ENCODE measurements at regions of chr4 and their contacts with region 1.

Region 1: DNA sequence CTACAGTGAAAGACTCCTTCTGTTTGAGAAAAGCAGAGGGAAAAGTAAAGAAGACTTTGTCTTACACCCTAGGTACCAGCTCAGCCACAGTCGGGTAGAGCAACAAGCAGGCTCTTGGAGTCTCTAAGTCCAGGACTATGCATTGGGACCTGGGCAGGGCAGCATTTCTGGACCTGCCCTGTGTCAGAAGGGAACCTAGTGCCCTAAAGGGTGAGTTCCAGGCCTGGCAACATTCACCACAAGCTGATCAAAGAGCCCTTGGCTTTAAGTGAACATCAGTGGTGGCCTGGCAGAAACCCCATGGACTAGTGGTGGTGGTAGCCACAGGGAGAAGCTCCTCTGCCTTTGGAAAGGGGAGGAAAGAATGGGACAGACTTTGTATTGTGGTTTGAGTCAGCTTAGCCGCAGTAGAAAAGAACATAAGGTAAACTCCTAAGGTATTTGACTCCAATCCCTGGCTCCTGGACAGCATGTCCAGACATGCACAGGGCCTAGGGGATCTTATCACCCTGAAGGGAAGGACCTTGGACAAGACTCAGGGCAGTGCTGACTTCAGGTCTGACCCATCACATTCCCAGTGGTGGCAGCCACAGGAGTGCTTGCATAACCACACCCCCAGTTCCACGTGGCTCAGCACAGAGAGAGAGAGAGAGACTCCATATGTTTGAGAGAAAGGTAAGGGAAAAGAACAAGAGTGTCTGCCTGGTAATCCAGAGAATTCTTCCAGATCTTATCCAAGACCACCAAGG is 32.6 kb downstream of the CCDC158 start:
- DNase-seq: no peak
- ATAC-seq: no peak
- H3K4me3 ChIP-seq: no peak overlapping the region
- H3K4me3 Mint-ChIP-seq: no peak overlapping the region
- H3K27ac ChIP-seq: no peak overlapping the region
- H3K27ac Mint-ChIP-seq: no peak overlapping the region
- H3K4me1 ChIP-seq: no peaks in the 10 kb centered on the region
- H3K4me1 Mint-ChIP-seq: no peaks in the 10 kb centered on the region
- H3K27me3 ChIP-seq: no peaks in the 10 kb centered on the region
- H3K27me3 Mint-ChIP-seq: peaks cover 34% of the 10 kb centered on the region
- CTCF ChIP-seq: no peak

Region 2: GRCh38 chr4:76354517-76355473 is 33.5 kb before region 1 on chr4:
- CTCF ChIA-PET with region 1: no interaction called
- POLR2A ChIA-PET with region 1: no interaction called
- intact Hi-C with region 1: no loop called
- DNase-seq: peak in 4 of 9 experiments; percentile 24 to 74 (median 54)
- ATAC-seq: peak; percentile 66
- H3K4me3 ChIP-seq: peak overlapping the region in 1 of 2 experiments; percentile 20
- H3K4me3 Mint-ChIP-seq: peak overlapping the region; percentile 2
- H3K27ac ChIP-seq: no peak overlapping the region
- H3K27ac Mint-ChIP-seq: peak overlapping the region; percentile 1
- H3K4me1 ChIP-seq: peaks cover 14% of the 10 kb centered on the region
- H3K4me1 Mint-ChIP-seq: peaks cover 13% of the 10 kb centered on the region
- H3K27me3 ChIP-seq: no peaks in the 10 kb centered on the region
- H3K27me3 Mint-ChIP-seq: no peaks in the 10 kb centered on the region
- CTCF ChIP-seq: no peak

Region 3: DNA sequence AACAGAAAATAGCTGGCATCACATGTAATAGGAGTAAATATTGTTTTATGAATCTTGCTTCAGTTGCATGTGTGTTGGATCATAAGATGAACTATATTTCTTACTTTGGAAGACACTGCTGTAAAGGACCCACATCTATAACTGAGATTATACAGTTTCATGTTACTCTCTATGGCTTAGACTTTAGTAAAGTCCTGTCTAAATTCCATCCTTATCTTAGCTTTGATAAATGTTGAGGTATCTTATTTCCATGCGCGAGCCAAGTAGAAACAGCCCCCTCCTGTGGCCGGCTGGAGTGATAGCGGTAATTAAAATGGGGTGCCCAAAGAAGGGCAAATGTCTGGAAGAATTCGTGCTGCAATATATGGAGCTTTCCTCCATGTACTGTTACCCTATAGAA is 10.4 kb before region 1 on chr4:
- CTCF ChIA-PET with region 1: interaction called, 16 read pairs
- POLR2A ChIA-PET with region 1: no interaction called
- intact Hi-C with region 1: no loop called
- DNase-seq: peak; percentile 11 to 62 (median 37)
- ATAC-seq: peak; percentile 49
- H3K4me3 ChIP-seq: no peak overlapping the region
- H3K4me3 Mint-ChIP-seq: no peak overlapping the region
- H3K27ac ChIP-seq: no peak overlapping the region
- H3K27ac Mint-ChIP-seq: no peak overlapping the region
- H3K4me1 ChIP-seq: no peaks in the 10 kb centered on the region
- H3K4me1 Mint-ChIP-seq: no peaks in the 10 kb centered on the region
- H3K27me3 ChIP-seq: no peaks in the 10 kb centered on the region
- H3K27me3 Mint-ChIP-seq: no peaks in the 10 kb centered on the region
- CTCF ChIP-seq: peak; percentile 60

Region 4: GRCh38 chr4:76738086-76738931 is 350.0 kb after region 1 on chr4:
- CTCF ChIA-PET with region 1: no interaction called
- POLR2A ChIA-PET with region 1: no interaction called
- intact Hi-C with region 1: loop called in 1 of 2 experiments (anchors 10 kb)
- DNase-seq: no peak
- ATAC-seq: no peak
- H3K4me3 ChIP-seq: no peak overlapping the region
- H3K4me3 Mint-ChIP-seq: no peak overlapping the region
- H3K27ac ChIP-seq: no peak overlapping the region
- H3K27ac Mint-ChIP-seq: no peak overlapping the region
- H3K4me1 ChIP-seq: no peaks in the 10 kb centered on the region
- H3K4me1 Mint-ChIP-seq: no peaks in the 10 kb centered on the region
- H3K27me3 ChIP-seq: no peaks in the 10 kb centered on the region
- H3K27me3 Mint-ChIP-seq: peaks cover 6% of the 10 kb centered on the region
- CTCF ChIP-seq: no peak

Measured in CD8-positive, alpha-beta T cell (primary cell).